ENCODE measurements at regions of chr19 and their contacts with region 1.

Region 1: DNA sequence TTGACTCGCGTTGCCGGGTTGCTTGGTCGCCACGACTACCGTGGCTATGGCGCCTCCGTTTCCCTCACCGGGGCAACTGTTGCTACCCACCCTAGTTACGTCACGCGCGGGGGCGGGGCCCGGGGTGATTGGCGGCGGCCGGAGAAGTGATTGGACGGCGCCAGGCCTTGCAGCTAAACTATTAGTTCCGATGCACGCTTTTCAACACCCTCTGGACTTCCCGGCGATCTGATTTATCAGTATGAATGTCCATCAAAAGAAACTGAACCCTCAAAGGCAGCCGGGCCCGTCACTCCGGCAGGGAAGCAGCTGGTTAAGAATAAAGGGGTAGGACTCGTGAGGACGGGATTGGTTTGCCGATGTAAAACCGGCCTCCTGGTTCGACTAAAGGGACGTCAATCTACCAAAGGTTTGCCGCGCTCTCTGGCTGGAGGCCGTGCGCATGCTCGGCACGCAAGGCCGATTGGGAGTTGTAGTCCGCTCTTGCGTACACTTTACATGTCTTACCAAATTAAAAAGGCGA is at the start of gene RFX1:
- DNase-seq: peak; percentile 100
- ATAC-seq: peak; percentile 74
- H3K4me3 Mint-ChIP-seq: peak within 1 kb of the TSS; percentile 94
- H3K27ac Mint-ChIP-seq: peak within 1 kb of the TSS; percentile 98
- H3K4me1 Mint-ChIP-seq: peaks cover 48% of the 10 kb centered on the region
- H3K27me3 Mint-ChIP-seq: no peaks in the 10 kb centered on the region
- CTCF ChIP-seq: no peak
- total RNA-seq, gene RFX1: 19.0 and 19.9 TPM in 2 replicates

Region 2: DNA sequence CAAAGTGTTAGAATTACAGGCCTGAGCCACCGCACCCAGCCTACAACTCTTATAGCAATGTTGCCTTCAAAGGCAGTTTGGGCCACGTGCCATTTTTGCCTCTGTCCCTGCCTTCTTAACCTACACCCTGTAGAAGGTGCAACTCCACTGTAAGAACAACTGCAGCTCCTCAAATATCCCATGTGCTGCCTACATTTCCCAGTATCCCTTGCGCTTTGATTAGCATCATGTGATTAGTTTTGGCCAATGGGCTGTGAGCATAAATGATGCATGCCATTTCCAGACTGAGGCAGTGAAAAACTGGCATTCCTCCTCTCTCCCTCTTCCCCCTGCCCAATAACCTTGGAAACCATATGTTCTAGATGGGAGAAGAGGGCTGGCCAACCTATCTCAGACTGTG is 317.2 kb before region 1 on chr19:
- CTCF ChIA-PET with region 1: no interaction called
- POLR2A ChIA-PET with region 1: no interaction called
- intact Hi-C with region 1: no loop called
- DNase-seq: no peak
- ATAC-seq: peak; percentile 25
- H3K4me3 Mint-ChIP-seq: no peak overlapping the region
- H3K27ac Mint-ChIP-seq: no peak overlapping the region
- H3K4me1 Mint-ChIP-seq: no peaks in the 10 kb centered on the region
- H3K27me3 Mint-ChIP-seq: peaks cover 18% of the 10 kb centered on the region
- CTCF ChIP-seq: no peak

Region 3: GRCh38 chr19:13817615-13818371 is 188.5 kb before region 1 on chr19:
- CTCF ChIA-PET with region 1: no interaction called
- POLR2A ChIA-PET with region 1: no interaction called
- intact Hi-C with region 1: no loop called
- DNase-seq: no peak
- ATAC-seq: peak; percentile 69
- H3K4me3 Mint-ChIP-seq: no peak overlapping the region
- H3K27ac Mint-ChIP-seq: no peak overlapping the region
- H3K4me1 Mint-ChIP-seq: peaks cover 2% of the 10 kb centered on the region
- H3K27me3 Mint-ChIP-seq: no peaks in the 10 kb centered on the region
- CTCF ChIP-seq: no peak

Region 4: DNA sequence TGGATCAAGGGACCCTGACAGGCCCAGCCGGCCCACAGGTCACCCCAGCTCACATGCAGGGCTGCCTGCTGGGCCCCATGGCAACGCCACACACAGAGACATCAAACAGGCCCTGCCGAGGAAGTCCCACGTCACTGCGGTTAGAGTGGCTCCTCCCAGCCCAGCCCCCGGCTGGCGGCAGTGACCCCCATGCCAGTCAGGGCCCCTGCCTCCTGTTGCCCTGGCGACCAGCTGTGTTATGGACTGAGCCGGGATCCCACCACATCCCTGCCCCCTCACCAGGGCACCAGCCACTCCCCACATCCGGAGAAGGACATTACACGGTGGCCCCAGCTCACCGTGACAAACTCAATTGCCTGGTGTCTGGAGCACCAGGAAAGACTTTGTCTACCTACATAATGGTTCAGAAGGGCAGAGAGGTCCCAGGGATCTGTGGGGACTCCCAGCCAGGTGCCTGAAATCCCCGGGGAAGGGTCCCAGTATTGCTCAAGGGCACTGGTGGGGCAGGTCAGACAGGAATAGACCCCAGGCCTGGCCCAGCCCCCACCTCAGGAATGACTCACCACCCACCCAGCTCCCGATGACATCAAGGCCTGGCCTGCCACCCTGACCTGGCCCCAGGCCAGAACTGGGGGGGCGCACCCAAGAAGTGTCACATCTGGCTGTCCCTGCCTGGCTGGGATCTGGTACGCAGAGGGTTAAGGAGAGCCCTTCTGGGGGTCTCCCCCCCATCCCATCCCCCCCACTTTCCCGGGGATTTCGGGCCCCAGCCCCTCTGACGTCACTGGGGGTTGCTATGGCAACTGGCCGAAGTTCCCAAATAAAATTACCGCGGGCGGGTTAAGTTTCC is 159.5 kb before region 1 on chr19:
- CTCF ChIA-PET with region 1: no interaction called
- POLR2A ChIA-PET with region 1: interaction called, 3 read pairs
- intact Hi-C with region 1: loop called (anchors 1 kb)
- DNase-seq: peak; percentile 92
- ATAC-seq: peak; percentile 56
- H3K4me3 Mint-ChIP-seq: peak overlapping the region; percentile 88
- H3K27ac Mint-ChIP-seq: peak overlapping the region; percentile 98
- H3K4me1 Mint-ChIP-seq: peaks cover 62% of the 10 kb centered on the region
- H3K27me3 Mint-ChIP-seq: peaks cover 3% of the 10 kb centered on the region
- CTCF ChIP-seq: no peak

Region 5: GRCh38 chr19:13952154-13953035 is 53.9 kb before region 1 on chr19 and contains the start of gene DCAF15:
- CTCF ChIA-PET with region 1: no interaction called
- POLR2A ChIA-PET with region 1: interaction called, 27 read pairs
- intact Hi-C with region 1: loop called (anchors 1 kb)
- DNase-seq: peak; percentile 89
- ATAC-seq: peak; percentile 96
- H3K4me3 Mint-ChIP-seq: peak within 1 kb of the TSS; percentile 94
- H3K27ac Mint-ChIP-seq: peak within 1 kb of the TSS; percentile 90
- H3K4me1 Mint-ChIP-seq: peaks cover 18% of the 10 kb centered on the region
- H3K27me3 Mint-ChIP-seq: no peaks in the 10 kb centered on the region
- CTCF ChIP-seq: no peak
- total RNA-seq, gene DCAF15: 71.4 and 83.4 TPM in 2 replicates

Region 6: DNA sequence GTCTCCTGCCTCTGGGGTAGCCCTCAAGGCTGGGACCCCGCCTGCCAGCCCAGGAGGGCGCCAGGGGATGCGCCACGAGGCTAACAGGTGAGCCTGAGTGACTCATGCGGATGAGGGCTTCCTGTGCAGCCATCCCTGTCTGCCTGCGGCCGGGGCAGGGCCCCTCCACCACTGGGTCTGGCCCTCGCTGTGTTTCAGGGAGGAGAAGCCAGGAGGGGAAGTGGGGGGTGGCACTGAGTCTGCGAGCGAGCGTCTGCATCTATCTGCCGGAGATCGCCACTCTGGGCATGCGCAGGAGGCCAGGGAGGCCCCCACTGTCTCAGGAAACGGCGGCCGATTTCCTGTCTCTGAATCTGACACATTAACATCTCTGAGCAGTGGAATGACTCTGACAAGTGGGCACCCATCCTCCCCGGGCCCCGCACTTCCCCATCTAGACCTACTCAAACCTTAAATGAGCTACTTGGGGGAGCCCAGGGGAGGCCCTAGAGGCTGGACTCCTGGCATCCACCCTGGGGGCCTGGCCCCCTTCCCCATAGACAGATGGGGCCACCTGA is 19.9 kb before region 1 on chr19:
- CTCF ChIA-PET with region 1: interaction called, 4 read pairs
- POLR2A ChIA-PET with region 1: interaction called, 107 read pairs
- intact Hi-C with region 1: loop called (anchors 1 kb)
- DNase-seq: peak; percentile 94
- ATAC-seq: peak; percentile 83
- H3K4me3 Mint-ChIP-seq: peak overlapping the region; percentile 60
- H3K27ac Mint-ChIP-seq: peak overlapping the region; percentile 97
- H3K4me1 Mint-ChIP-seq: peaks cover 78% of the 10 kb centered on the region
- H3K27me3 Mint-ChIP-seq: no peaks in the 10 kb centered on the region
- CTCF ChIP-seq: no peak

Region 7: DNA sequence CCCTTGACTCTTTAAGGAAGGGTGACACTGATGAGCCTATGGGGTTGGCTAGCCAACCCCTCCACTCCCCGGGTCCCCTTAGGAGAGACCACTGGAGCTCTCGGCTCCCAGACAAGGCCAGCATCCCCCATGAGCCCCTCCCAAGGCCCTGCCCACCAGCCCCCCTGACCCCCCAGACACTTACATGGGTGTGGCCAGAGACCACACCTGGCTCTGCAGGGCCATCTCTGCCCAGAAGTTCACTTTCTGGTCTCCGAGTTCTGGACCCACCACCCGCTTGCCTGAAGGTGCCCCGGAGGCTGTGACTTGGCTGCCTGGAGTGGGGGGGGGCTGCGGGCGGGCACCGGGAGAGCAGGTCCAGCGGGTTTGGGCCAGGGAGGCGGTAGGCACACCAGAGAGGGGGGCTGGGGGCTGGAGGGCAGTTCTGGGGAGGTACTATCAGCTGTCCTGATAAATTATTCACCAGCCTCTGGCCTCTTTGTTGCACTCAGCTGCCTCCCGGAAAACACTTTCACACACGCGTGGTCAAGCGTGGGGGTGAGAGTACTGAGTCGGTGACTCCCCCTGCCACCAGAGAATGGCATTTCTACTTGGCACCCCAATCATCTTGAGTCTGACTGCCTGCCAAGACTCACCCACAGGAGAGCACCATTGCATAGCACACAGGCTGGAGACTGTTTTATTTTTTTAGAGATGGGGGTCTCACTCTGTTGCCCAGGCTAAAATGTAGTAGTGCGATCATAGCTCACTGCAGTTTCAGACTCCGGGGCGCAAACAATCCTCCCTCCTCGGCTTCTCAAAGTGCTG is 55.7 kb after region 1 on chr19 and contains the start of gene PALM3:
- CTCF ChIA-PET with region 1: no interaction called
- POLR2A ChIA-PET with region 1: no interaction called
- intact Hi-C with region 1: no loop called
- DNase-seq: no peak
- ATAC-seq: no peak
- H3K4me3 Mint-ChIP-seq: no peak within 1 kb of the TSS
- H3K27ac Mint-ChIP-seq: no peak within 1 kb of the TSS
- H3K4me1 Mint-ChIP-seq: peaks cover 16% of the 10 kb centered on the region
- H3K27me3 Mint-ChIP-seq: peaks cover 36% of the 10 kb centered on the region
- CTCF ChIP-seq: no peak
- total RNA-seq, gene PALM3: not detected in 2 replicates

Region 8: GRCh38 chr19:14073261-14073924 is 67.1 kb after region 1 on chr19:
- CTCF ChIA-PET with region 1: no interaction called
- POLR2A ChIA-PET with region 1: interaction called, 10 read pairs
- intact Hi-C with region 1: no loop called
- DNase-seq: peak; percentile 88
- ATAC-seq: peak; percentile 66
- H3K4me3 Mint-ChIP-seq: peak overlapping the region; percentile 86
- H3K27ac Mint-ChIP-seq: no peak overlapping the region
- H3K4me1 Mint-ChIP-seq: peaks cover 19% of the 10 kb centered on the region
- H3K27me3 Mint-ChIP-seq: no peaks in the 10 kb centered on the region
- CTCF ChIP-seq: no peak

Region 9: DNA sequence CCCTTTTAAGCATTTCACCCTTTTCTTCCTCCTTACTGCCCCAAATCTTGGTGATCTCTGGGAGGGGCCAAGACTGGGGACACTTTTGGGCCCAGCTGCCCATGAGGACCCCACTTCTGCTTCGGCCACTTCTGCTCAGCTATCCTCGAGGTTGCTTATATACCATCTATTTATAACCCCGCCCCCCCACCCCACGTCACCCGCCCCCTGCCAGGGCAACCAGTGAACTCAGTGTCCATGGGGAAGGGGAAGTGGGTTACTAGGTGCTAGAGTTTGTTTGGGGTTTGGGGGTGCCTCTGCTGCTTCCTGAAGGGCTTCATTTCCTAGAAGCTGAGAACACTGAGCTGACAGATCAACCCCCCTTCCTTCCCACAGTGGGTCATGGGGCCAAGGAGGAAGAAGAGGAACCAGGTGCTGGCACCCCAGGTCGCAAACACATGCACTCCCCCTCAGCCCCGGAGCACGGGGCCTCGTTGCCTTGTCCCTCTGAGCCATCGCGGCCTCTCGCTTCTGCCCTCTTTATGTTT is 368.8 kb after region 1 on chr19:
- CTCF ChIA-PET with region 1: no interaction called
- POLR2A ChIA-PET with region 1: no interaction called
- intact Hi-C with region 1: loop called (anchors 5 kb)
- DNase-seq: peak; percentile 61
- ATAC-seq: peak; percentile 58
- H3K4me3 Mint-ChIP-seq: peak overlapping the region; percentile 66
- H3K27ac Mint-ChIP-seq: peak overlapping the region; percentile 97
- H3K4me1 Mint-ChIP-seq: peaks cover 77% of the 10 kb centered on the region
- H3K27me3 Mint-ChIP-seq: no peaks in the 10 kb centered on the region
- CTCF ChIP-seq: no peak